Heart right ventricle (tissue), 16 donors: ENCODE measurements at regions of chr9 and their contacts with region 1.

Region 1: DNA sequence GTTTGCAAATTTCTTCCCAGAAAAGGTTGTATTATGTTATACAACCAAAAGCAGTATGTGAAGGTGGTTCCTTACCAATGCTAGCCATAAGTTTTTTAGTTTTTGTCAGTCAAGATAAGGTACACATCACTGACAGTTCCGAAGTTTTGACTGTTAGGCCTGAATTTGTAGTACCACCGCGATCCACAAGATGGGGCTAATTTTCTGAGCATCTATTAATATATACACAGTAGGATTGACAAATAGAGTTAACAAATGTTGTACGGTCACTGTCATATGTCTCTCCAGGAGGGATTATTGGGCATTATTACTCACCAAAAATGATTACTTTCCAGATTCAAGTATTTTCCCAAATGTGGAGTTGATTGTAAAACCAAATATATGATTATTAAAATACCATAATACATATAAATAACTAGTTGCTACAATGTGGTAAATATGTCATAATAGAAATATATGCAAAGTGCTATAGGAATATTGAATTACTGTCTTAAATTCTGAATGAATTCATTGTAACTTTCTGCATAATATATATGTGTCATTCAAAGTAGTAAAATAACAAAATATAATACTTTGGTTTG is 28.4 kb upstream of the LRRC19 start:
- DNase-seq: peak in 1 of 2 donors; percentile 63
- ATAC-seq: peak in 4 of 8 donors; percentile 48 to 74 (median 61)
- H3K4me3 ChIP-seq: no peak overlapping the region
- H3K27ac ChIP-seq: no peak overlapping the region
- H3K4me1 ChIP-seq: peaks cover 0 to 6% (median 0%) of the 10 kb centered on the region in 9 donors
- H3K27me3 ChIP-seq: no peaks in the 10 kb centered on the region
- CTCF ChIP-seq: peak; percentile 70 to 91 (median 83)

Region 2: DNA sequence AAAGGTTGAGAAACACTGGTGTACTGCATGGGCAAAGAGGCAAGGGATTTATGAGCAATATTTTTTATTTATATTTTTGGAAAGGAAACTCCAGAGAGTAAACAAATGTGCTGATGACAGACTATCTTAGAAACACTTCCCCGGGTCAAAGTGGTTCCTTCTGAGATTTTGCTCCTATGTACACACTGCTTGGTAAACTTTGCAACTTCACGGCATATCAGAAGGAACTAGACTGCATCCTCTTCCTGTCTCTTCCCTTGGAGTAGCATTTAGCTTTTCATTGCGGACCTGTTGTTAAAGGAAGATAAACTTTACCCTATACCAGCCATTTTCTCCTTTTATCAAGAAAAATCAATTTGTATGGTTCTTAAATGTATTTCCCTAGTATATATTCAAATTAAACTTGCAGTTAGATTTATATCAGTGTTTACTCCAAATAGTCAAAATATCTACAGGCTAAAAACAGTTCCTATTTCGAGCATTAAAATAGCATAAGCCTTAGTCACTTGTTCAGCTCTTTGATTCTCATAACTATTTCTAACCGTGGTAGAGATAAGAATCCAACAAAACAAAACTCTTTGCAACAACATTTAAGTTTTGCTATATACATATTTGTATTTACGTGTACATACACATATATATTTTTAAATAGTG is 19.6 kb after region 1 on chr9:
- intact Hi-C with region 1: no loop called
- DNase-seq: no peak
- ATAC-seq: peak in 3 of 8 donors; percentile 46 to 65 (median 59)
- H3K4me3 ChIP-seq: no peak overlapping the region
- H3K27ac ChIP-seq: peak overlapping the region in 1 of 10 donors; percentile 22
- H3K4me1 ChIP-seq: peaks cover 0 to 14% (median 8%) of the 10 kb centered on the region in 9 donors
- H3K27me3 ChIP-seq: no peaks in the 10 kb centered on the region
- CTCF ChIP-seq: no peak

Region 3: DNA sequence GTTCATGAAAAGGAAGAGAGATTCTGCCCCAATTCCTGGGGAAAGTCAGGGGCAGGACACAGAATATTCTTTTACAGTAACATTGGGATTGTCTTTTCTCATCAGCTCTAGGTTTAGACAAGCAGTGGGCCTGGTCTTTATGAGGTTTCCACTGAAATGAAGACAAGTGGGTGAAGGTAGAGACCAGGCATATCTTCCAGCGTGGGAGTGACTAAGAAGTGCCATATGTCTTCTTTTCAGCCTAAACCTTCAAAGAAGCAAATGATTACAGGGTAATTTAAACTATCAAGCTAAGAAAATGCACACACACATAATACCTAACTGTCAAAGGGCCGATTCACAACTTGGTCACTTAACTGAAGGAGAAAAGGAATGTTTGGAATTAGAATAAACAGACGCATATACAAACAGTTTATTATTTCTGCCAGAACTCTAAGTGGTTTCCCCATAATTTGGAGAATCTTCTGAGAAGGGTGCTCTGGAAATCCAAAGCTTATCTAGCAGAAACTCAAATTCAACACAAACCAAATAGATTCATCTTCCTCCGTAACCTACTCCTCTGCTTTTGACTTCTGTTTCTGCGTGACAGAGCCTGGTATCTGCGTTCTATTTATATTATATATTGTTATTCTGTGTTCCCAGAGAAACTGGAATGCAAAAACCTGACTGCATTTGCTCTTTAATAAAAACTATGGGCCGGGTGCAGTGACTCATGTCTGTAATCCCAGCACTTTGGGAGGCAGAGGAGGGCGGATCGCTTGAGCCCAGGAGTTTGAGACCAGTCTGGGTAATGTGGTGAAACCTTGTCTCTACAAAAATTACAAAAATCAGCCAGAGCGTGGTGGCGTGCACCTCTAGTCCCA is 53.1 kb after region 1 on chr9:
- intact Hi-C with region 1: loop called in 1 of 10 experiments (anchors 5 kb)
- DNase-seq: no peak
- ATAC-seq: peak in 1 of 8 donors; percentile 48
- H3K4me3 ChIP-seq: no peak overlapping the region
- H3K27ac ChIP-seq: no peak overlapping the region
- H3K4me1 ChIP-seq: peaks cover 0 to 15% (median 0%) of the 10 kb centered on the region in 9 donors
- H3K27me3 ChIP-seq: no peaks in the 10 kb centered on the region
- CTCF ChIP-seq: no peak

Region 4: DNA sequence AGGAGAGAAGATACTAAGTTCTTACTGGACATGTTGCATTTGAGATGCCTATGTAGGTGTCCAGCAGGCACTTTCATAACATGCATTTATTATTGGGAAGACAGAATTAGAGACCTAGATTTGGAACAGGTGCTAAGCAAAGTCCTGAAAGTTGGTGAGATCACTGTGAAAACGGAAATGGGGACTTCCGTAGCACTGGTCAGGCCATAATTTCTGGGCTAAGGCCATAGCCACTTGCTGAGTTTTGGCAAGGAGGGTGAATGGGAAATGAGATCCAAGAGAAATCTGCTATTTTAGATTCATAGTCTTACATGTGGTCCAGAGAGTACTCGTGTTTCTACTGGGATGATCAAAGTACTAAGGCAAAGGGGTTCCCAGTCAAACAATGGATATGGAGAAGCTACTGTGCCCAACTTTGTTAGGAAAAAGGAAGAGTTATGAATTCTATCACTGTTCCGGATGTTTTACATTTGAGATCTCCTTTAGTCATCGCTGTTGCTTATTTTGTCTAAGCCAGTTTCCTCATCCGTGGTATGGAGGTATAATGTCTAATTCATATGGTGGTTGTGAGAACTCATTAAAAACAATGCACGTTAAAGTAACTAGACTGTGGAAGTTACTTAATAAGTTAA is 108.5 kb after region 1 on chr9:
- intact Hi-C with region 1: no loop called
- DNase-seq: no peak
- ATAC-seq: peak in 3 of 8 donors; percentile 44 to 67 (median 46)
- H3K4me3 ChIP-seq: no peak overlapping the region
- H3K27ac ChIP-seq: peak overlapping the region in 1 of 10 donors; percentile 28
- H3K4me1 ChIP-seq: peaks cover 0 to 51% (median 8%) of the 10 kb centered on the region in 9 donors
- H3K27me3 ChIP-seq: no peaks in the 10 kb centered on the region
- CTCF ChIP-seq: no peak

Region 5: GRCh38 chr9:27194401-27195091 is 160.6 kb after region 1 on chr9:
- intact Hi-C with region 1: loop called in 4 of 10 experiments (anchors 5 to 10 kb)
- DNase-seq: no peak
- ATAC-seq: peak in 1 of 8 donors; percentile 42
- H3K4me3 ChIP-seq: no peak overlapping the region
- H3K27ac ChIP-seq: peak overlapping the region in 4 of 10 donors; percentile 23 to 66 (median 56)
- H3K4me1 ChIP-seq: peaks cover 0 to 56% (median 28%) of the 10 kb centered on the region in 9 donors
- H3K27me3 ChIP-seq: no peaks in the 10 kb centered on the region
- CTCF ChIP-seq: no peak

Region 6: GRCh38 chr9:27204578-27204977 is 170.7 kb after region 1 on chr9:
- intact Hi-C with region 1: loop called in 7 of 10 experiments (anchors 5 to 10 kb)
- DNase-seq: no peak
- ATAC-seq: no peak
- H3K4me3 ChIP-seq: no peak overlapping the region
- H3K27ac ChIP-seq: no peak overlapping the region
- H3K4me1 ChIP-seq: peaks cover 0 to 5% (median 0%) of the 10 kb centered on the region in 9 donors
- H3K27me3 ChIP-seq: no peaks in the 10 kb centered on the region
- CTCF ChIP-seq: no peak

Region 7: DNA sequence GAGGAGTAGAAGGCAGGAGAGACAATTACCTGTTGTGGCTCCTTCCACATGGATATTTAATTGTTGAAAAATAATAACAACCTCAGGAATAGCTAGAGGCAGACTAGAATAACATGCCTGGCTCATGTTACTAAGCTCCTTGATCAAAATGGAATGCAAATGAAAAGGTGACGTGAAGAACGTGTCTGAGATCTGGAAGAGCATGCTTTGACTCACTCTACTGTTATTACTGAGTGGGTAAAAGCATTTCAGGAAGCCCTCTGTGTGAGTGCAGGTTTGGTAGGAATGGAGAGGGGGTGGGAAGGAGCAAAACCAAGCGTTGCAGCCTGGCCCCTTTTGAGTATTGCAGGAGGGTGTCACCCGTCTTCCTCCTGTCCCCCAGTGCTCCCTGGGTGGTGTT is 178.3 kb after region 1 on chr9:
- intact Hi-C with region 1: loop called in 3 of 10 experiments (anchors 10 kb)
- DNase-seq: no peak
- ATAC-seq: no peak
- H3K4me3 ChIP-seq: no peak overlapping the region
- H3K27ac ChIP-seq: no peak overlapping the region
- H3K4me1 ChIP-seq: no peaks in the 10 kb centered on the region
- H3K27me3 ChIP-seq: no peaks in the 10 kb centered on the region
- CTCF ChIP-seq: no peak

Region 8: GRCh38 chr9:27276193-27277030 is 242.5 kb after region 1 on chr9:
- intact Hi-C with region 1: loop called (anchors 1 to 10 kb)
- DNase-seq: peak in 1 of 2 donors; percentile 16
- ATAC-seq: peak in 5 of 8 donors; percentile 44 to 61 (median 51)
- H3K4me3 ChIP-seq: peak overlapping the region in 6 of 10 donors; percentile 16 to 29 (median 22)
- H3K27ac ChIP-seq: no peak overlapping the region
- H3K4me1 ChIP-seq: peaks cover 0 to 16% (median 4%) of the 10 kb centered on the region in 9 donors
- H3K27me3 ChIP-seq: no peaks in the 10 kb centered on the region
- CTCF ChIP-seq: peak; percentile 67 to 90 (median 81)